Cardiac septum (tissue), 1 donor: ENCODE measurements at regions of chr3 and their contacts with region 1.

Region 1: GRCh38 chr3:113136071-113136470 is 75.3 kb upstream of the BOC start:
- DNase-seq: no peak

Region 2: DNA sequence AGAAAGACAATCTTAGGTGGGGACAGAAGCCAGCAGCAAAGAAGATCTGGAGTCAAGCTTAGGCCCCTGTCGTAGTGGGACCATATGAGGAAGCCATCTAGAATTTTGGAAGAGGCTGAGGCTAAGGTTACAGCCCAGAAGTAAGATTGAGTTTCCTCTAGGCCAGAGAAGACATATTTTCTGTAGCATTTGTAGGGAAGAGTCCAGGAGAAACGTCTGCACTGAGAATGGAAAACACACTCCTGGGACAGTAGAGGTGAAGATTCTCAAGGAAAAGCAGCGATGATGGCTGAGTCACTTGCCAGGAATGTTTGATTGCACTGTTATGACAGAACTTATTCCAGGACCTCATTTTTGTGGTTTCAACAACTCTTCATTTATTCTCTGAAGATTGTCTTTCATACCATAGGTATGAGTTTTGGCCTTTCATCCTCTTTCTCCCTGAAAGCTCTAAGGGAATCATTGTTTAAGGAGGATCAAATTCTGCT is 38.1 kb before region 1 on chr3:
- intact Hi-C with region 1: no loop called
- DNase-seq: no peak

Region 3: DNA sequence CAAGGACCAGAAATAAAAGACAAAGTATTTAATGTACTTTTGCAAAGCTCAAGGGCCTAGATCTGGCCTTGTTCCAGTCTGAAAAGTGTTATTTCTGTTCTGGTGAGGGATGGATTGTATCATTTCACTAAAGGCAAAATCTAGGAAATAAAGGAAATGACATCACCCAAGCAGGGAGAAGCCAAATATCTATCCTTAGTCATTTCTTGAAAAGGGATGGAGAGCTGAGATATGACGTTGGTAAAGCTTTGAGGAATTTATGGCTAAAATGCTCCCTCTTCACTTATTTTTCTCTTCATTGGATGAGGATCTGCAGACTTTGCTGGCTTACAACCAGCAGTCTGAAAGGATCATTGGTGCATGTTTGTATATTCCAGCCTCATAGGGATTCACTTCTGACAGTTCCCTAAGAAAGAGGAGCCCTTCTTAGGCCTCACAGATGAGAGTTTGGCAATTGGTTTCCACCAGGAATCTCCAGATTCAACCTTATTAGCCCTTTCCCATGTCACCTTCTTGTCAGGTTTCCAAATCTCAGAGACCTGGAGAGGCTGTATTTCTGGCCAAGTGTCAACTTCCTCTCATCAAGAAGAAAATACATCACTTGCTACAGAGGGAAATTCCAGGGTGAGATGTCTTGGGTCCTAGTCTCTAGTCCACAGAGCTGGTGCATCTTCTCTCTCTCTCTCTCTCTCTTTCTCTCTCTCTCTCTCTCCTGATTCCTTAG is 18.4 kb before region 1 on chr3:
- intact Hi-C with region 1: loop called (anchors 1 kb)
- DNase-seq: no peak

Region 4: GRCh38 chr3:113287803-113288648 is 152.0 kb after region 1 on chr3:
- intact Hi-C with region 1: loop called (anchors 1 kb)
- DNase-seq: no peak